Heart right ventricle (tissue), 16 donors: ENCODE measurements at regions of chr4 and their contacts with region 1.

Region 1: GRCh38 chr4:155512817-155513216 is 136.1 kb upstream of the MAP9 start:
- DNase-seq: peak in 1 of 2 donors; percentile 82
- ATAC-seq: peak; percentile 52 to 81 (median 76)
- H3K4me3 ChIP-seq: no peak overlapping the region
- H3K27ac ChIP-seq: peak overlapping the region in 9 of 10 donors; percentile 28 to 85 (median 68)
- H3K4me1 ChIP-seq: peaks cover 0 to 74% (median 39%) of the 10 kb centered on the region in 9 donors
- H3K27me3 ChIP-seq: no peaks in the 10 kb centered on the region
- CTCF ChIP-seq: no peak

Region 2: DNA sequence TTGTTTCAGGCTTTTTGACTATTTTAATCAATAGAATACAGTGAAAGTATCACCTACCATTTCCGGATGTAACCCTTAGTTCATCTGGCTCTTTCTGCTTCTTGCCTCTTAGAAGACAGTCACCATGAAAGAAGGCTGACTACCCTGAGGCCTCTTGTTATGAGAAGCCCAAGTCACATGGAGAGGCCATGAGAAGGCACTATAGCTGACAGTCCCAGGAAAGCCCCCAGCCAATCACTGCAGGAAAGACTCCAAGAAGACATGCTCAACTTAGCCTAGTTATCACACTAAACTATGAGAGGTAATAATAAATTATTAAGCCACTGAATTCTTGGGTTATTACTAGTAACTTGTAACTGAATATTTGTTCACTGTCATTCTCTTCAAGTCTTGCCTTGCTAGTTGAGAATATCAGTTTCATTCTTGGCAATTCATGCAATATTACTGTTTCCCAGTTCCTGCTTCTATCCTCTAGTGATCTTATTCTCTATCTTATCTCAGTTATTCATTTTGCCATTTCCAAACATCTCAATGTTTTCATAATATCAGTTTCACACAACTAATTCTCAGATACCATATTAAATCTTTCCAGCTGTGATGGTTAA is 96.7 kb after region 1 on chr4:
- intact Hi-C with region 1: loop called in 1 of 10 experiments (anchors 10 kb)
- DNase-seq: no peak
- ATAC-seq: no peak
- H3K4me3 ChIP-seq: no peak overlapping the region
- H3K27ac ChIP-seq: peak overlapping the region in 3 of 10 donors; percentile 11 to 34 (median 24)
- H3K4me1 ChIP-seq: peaks cover 0 to 30% (median 9%) of the 10 kb centered on the region in 9 donors
- H3K27me3 ChIP-seq: no peaks in the 10 kb centered on the region
- CTCF ChIP-seq: no peak

Region 3: GRCh38 chr4:155758481-155759404 is 245.9 kb after region 1 on chr4 and contains the start of gene GUCY1B1:
- intact Hi-C with region 1: loop called in 1 of 10 experiments (anchors 10 kb)
- DNase-seq: peak; percentile 95 to 97
- ATAC-seq: peak; percentile 96 to 99 (median 98)
- H3K4me3 ChIP-seq: peak within 1 kb of the TSS; percentile 70 to 90 (median 78)
- H3K27ac ChIP-seq: peak within 1 kb of the TSS; percentile 84 to 96 (median 92)
- H3K4me1 ChIP-seq: peaks cover 0 to 31% (median 12%) of the 10 kb centered on the region in 9 donors
- H3K27me3 ChIP-seq: peaks cover 0 to 19% (median 0%) of the 10 kb centered on the region in 7 donors
- CTCF ChIP-seq: peak; percentile 28 to 76 (median 57)
- total RNA-seq, gene GUCY1B1: 10.7 to 29.9 (median 17.1) TPM

Region 4: DNA sequence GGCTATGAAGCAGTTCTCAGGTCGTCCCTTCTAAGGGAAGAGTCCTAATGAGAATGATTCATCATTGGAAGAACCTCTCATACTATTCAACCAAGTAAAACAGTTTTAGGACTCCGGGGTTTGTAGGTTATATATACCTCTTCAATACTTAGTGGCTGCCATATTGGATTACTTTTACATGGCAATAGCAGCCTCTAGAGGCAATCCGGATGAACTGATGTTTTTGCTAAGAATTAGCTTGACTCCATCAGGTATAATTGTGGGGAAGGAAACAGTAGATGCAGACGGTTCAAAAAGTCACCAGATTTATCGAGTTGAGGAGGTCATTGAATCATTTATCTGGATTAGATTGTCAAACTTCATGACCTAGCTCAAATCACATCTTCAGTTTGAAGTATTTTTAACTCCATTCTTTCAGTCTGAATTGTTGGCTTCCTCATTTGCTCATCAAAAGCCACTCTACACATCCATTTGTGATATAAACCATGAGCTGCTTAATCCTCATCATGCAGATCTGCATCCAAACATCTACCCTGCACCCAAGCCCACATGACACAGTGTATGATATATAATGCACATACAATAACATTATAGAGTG is 274.4 kb after region 1 on chr4:
- intact Hi-C with region 1: loop called in 1 of 10 experiments (anchors 5 kb)
- DNase-seq: no peak
- ATAC-seq: peak; percentile 73 to 91 (median 87)
- H3K4me3 ChIP-seq: no peak overlapping the region
- H3K27ac ChIP-seq: no peak overlapping the region
- H3K4me1 ChIP-seq: peaks cover 0 to 57% (median 7%) of the 10 kb centered on the region in 9 donors
- H3K27me3 ChIP-seq: no peaks in the 10 kb centered on the region
- CTCF ChIP-seq: peak; percentile 51 to 90 (median 73)